Motor neuron (in vitro differentiated cells): ENCODE measurements at regions of chr10 and their contacts with region 1.

Region 1: GRCh38 chr10:122703439-122704118 is 3.9 kb upstream of the C10orf120 start:
- ATAC-seq: peak; percentile 52 to 98 (median 64)
- H3K4me3 ChIP-seq: no peak overlapping the region
- H3K27ac ChIP-seq: no peak overlapping the region
- H3K4me1 ChIP-seq: peaks cover 17 to 24% of the 10 kb centered on the region in 2 donors

Region 2: GRCh38 chr10:122655524-122656307 is 47.9 kb before region 1 on chr10:
- in situ Hi-C with region 1: loop called in 1 of 9 experiments (anchors 10 kb)
- ATAC-seq: peak in 1 of 8 experiments; percentile 67
- H3K4me3 ChIP-seq: no peak overlapping the region
- H3K27ac ChIP-seq: no peak overlapping the region
- H3K4me1 ChIP-seq: no peaks in the 10 kb centered on the region